Left colon (tissue), 2 donors: ENCODE measurements at regions of chr3 and their contacts with region 1.

Region 1: GRCh38 chr3:65168547-65168946 is 480.7 kb upstream of the ADAMTS9 start:
- DNase-seq: no peak
- ATAC-seq: no peak

Region 2: GRCh38 chr3:64685800-64686445 is 482.6 kb before region 1 on chr3:
- intact Hi-C with region 1: loop called in 1 of 2 experiments (anchors 10 kb)
- DNase-seq: peak; percentile 87 to 92
- ATAC-seq: peak; percentile 87